CD4-positive, alpha-beta memory T cell (primary cell): ENCODE measurements at regions of chr12 and their contacts with region 1.

Region 1: DNA sequence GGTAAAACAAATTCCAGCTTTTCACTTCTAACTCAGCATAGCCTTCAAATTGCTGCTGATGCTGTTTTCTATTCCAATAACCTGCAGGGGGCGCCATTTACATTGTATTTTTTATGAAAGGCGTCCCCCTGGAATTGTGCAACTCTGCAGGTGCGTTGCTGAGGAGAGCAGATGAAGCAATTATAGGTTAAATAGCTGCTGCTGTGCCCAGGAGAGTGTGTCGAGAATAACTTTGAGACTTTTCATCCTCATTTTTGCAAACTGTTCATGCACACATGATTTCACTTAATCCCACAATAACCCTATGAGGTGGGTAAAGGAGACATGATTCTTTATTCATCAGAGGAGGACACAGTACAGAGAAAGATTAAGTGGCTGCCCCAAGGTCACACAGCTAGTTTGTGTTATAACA is 75.7 kb downstream of the MYRFL start:
- DNase-seq: peak; percentile 44 to 55 (median 48)
- H3K4me3 ChIP-seq: no peak overlapping the region
- H3K4me3 Mint-ChIP-seq: no peak overlapping the region
- H3K27ac ChIP-seq: no peak overlapping the region
- H3K27ac Mint-ChIP-seq: no peak overlapping the region
- H3K4me1 ChIP-seq: no peaks in the 10 kb centered on the region
- H3K4me1 Mint-ChIP-seq: no peaks in the 10 kb centered on the region
- H3K27me3 ChIP-seq: no peaks in the 10 kb centered on the region
- H3K27me3 Mint-ChIP-seq: peaks cover 0 to 10% of the 10 kb centered on the region in 2 donors

Region 2: GRCh38 chr12:69879041-69879960 is 21.4 kb before region 1 on chr12:
- CTCF ChIA-PET with region 1: interaction called, 36 read pairs
- POLR2A ChIA-PET with region 1: no interaction called
- intact Hi-C with region 1: no loop called
- DNase-seq: peak; percentile 42 to 57 (median 49)
- H3K4me3 ChIP-seq: no peak overlapping the region
- H3K4me3 Mint-ChIP-seq: peak overlapping the region in 2 of 8 donors; percentile 31 to 45
- H3K27ac ChIP-seq: no peak overlapping the region
- H3K27ac Mint-ChIP-seq: peak overlapping the region in 1 of 7 donors; percentile 15
- H3K4me1 ChIP-seq: no peaks in the 10 kb centered on the region
- H3K4me1 Mint-ChIP-seq: peaks cover 0 to 11% (median 3%) of the 10 kb centered on the region in 4 donors
- H3K27me3 ChIP-seq: no peaks in the 10 kb centered on the region
- H3K27me3 Mint-ChIP-seq: peaks cover 0 to 19% of the 10 kb centered on the region in 2 donors

Region 3: GRCh38 chr12:69885658-69886057 is 15.1 kb before region 1 on chr12:
- CTCF ChIA-PET with region 1: interaction called, 36 read pairs
- POLR2A ChIA-PET with region 1: no interaction called
- intact Hi-C with region 1: no loop called
- DNase-seq: no peak
- H3K4me3 ChIP-seq: no peak overlapping the region
- H3K4me3 Mint-ChIP-seq: no peak overlapping the region
- H3K27ac ChIP-seq: no peak overlapping the region
- H3K27ac Mint-ChIP-seq: no peak overlapping the region
- H3K4me1 ChIP-seq: no peaks in the 10 kb centered on the region
- H3K4me1 Mint-ChIP-seq: no peaks in the 10 kb centered on the region
- H3K27me3 ChIP-seq: no peaks in the 10 kb centered on the region
- H3K27me3 Mint-ChIP-seq: peaks cover 2 to 4% of the 10 kb centered on the region in 2 donors

Region 4: DNA sequence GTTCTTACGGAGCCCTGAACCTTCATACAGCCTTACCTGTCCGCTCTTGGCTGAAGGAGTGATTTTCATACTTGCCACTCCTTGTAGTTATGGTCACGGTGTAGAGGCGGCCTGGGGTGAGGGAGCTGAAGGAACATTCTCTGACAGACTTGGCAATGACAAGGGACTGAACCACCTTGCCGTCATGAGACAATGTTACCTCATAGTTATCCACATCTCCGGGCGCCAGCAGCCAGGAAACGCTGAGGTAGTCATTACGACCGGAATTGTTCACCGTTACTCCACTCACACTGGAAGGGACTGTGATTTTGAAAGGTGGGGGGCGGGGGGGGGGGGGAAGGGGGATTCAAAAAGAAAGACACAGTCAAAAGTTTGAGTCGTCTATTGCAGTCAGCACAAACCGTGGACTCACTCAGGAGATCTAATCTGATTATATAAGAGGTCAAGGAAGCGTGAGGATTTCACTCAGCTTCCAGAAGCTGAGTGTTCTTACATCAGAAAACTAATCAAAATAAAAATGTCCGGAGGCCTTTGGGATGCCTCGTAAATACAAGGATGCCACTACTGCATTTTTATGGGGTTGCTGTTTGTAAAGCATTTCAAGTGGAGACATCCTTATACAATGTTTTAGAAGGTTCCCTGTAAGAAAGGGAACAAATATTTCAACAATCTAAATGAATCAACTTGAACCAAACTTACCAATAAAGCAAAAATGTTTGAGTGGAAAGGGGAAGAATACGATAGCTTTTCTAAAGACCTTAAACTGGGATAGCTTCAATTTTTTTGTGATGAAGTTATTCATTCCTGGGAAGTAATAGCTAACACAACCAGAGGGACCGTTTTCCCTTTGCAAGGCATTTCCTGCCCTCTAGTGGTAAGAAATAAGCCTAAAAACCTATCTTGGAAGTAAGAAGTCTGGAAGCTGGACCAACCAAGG is 675.9 kb after region 1 on chr12:
- CTCF ChIA-PET with region 1: interaction called, 126 read pairs
- POLR2A ChIA-PET with region 1: no interaction called
- intact Hi-C with region 1: loop called (anchors 1 kb)
- DNase-seq: peak in 4 of 5 donors; percentile 38 to 47 (median 42)
- H3K4me3 ChIP-seq: no peak overlapping the region
- H3K4me3 Mint-ChIP-seq: no peak overlapping the region
- H3K27ac ChIP-seq: no peak overlapping the region
- H3K27ac Mint-ChIP-seq: no peak overlapping the region
- H3K4me1 ChIP-seq: no peaks in the 10 kb centered on the region
- H3K4me1 Mint-ChIP-seq: no peaks in the 10 kb centered on the region
- H3K27me3 ChIP-seq: no peaks in the 10 kb centered on the region
- H3K27me3 Mint-ChIP-seq: peaks cover 7 to 18% of the 10 kb centered on the region in 2 donors

Region 5: GRCh38 chr12:70719672-70720420 is 819.1 kb after region 1 on chr12:
- CTCF ChIA-PET with region 1: interaction called, 5 read pairs
- POLR2A ChIA-PET with region 1: no interaction called
- intact Hi-C with region 1: loop called (anchors 1 kb)
- DNase-seq: peak in 3 of 5 donors; percentile 11 to 31 (median 12)
- H3K4me3 ChIP-seq: no peak overlapping the region
- H3K4me3 Mint-ChIP-seq: peak overlapping the region in 7 of 8 donors; percentile 28 to 80 (median 70)
- H3K27ac ChIP-seq: no peak overlapping the region
- H3K27ac Mint-ChIP-seq: no peak overlapping the region
- H3K4me1 ChIP-seq: peaks cover 5% of the 10 kb centered on the region
- H3K4me1 Mint-ChIP-seq: peaks cover 0 to 8% (median 4%) of the 10 kb centered on the region in 4 donors
- H3K27me3 ChIP-seq: no peaks in the 10 kb centered on the region
- H3K27me3 Mint-ChIP-seq: peaks cover 2 to 4% of the 10 kb centered on the region in 2 donors

Region 6: DNA sequence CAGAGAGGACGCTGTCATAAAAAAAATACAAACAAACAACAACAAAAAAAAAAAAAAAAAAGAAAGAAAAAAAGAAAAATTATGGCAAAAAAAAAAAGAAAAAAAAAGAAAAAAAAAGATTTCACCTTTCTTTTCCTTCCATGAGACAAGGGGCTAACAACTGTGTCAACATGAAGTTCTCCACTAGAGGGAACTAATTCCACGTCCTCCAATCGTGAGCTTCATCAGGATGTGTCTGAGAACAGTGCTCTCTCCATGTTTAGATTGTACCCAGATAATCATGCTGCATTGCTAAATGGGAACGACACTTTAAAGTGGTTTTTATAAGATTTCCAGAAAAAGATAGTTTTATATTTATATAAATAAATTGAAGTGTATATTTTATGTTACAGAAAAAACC is 832.7 kb after region 1 on chr12:
- CTCF ChIA-PET with region 1: interaction called, 9 read pairs
- POLR2A ChIA-PET with region 1: no interaction called
- intact Hi-C with region 1: loop called (anchors 1 kb)
- DNase-seq: peak in 2 of 5 donors; percentile 11 to 30
- H3K4me3 ChIP-seq: no peak overlapping the region
- H3K4me3 Mint-ChIP-seq: no peak overlapping the region
- H3K27ac ChIP-seq: no peak overlapping the region
- H3K27ac Mint-ChIP-seq: no peak overlapping the region
- H3K4me1 ChIP-seq: no peaks in the 10 kb centered on the region
- H3K4me1 Mint-ChIP-seq: peaks cover 0 to 1% (median 0%) of the 10 kb centered on the region in 4 donors
- H3K27me3 ChIP-seq: no peaks in the 10 kb centered on the region
- H3K27me3 Mint-ChIP-seq: peaks cover 4 to 5% of the 10 kb centered on the region in 2 donors